A549 (cell line): ENCODE measurements at regions of chr5 and their contacts with region 1.

Region 1: GRCh38 chr5:55226027-55226933 is 835 bp downstream of the MCIDAS start:
- DNase-seq: peak; percentile 89 to 92
- ATAC-seq: peak; percentile 76 to 91
- H3K4me3 ChIP-seq: peak overlapping the region; percentile 55
- H3K27ac ChIP-seq: peak overlapping the region; percentile 64 to 90
- H3K4me1 ChIP-seq: 0 out of 3 replicates have a peak, but pooled peaks cover 5% of the 10 kb centered on the region
- CTCF ChIP-seq: peak; percentile 68
- EP300 ChIP-seq: no peak
- POLR2A ChIP-seq: peak; percentile 38
- RAD21 ChIP-seq: peak; percentile 70 to 71

Region 2: DNA sequence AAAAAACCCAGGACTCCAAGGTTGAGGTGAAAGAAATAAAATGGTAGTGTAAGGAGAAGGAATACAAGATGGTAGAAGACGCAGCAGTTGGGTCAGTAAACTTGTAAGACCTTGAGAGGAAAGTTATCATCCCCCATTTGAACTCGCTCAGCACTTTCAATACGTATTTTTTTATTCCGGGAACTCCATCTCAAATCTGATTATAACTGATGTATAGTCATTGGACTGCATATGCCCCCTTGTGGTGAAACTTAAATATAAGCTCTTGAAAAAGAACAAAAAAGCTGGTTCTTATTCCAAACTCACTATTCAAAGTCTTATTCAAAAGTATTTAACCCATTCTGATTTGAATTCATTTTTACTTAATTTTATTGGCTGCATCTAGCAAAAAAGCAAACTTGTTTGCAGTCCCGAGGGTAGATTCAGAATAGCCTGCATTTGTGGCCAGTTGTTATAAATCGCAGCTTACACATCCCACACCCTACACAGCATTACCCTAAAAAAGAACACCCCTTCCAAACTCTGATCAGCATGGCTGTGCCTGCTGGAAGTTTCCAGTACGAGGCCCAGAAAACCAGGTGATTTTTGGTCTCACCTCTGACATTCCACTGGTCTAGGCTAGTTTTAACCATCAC is 358.9 kb before region 1 on chr5:
- CTCF ChIA-PET with region 1: no interaction called
- POLR2A ChIA-PET with region 1: no interaction called
- DNase-seq: peak; percentile 41 to 50
- ATAC-seq: peak in 1 of 2 experiments; percentile 67; a peak in 3 of 6 replicates
- H3K4me3 ChIP-seq: no peak overlapping the region
- H3K27ac ChIP-seq: no peak overlapping the region
- H3K4me1 ChIP-seq: no peaks in the 10 kb centered on the region
- CTCF ChIP-seq: peak; percentile 70
- EP300 ChIP-seq: no peak
- POLR2A ChIP-seq: no peak
- RAD21 ChIP-seq: peak; percentile 57 to 63

Region 3: DNA sequence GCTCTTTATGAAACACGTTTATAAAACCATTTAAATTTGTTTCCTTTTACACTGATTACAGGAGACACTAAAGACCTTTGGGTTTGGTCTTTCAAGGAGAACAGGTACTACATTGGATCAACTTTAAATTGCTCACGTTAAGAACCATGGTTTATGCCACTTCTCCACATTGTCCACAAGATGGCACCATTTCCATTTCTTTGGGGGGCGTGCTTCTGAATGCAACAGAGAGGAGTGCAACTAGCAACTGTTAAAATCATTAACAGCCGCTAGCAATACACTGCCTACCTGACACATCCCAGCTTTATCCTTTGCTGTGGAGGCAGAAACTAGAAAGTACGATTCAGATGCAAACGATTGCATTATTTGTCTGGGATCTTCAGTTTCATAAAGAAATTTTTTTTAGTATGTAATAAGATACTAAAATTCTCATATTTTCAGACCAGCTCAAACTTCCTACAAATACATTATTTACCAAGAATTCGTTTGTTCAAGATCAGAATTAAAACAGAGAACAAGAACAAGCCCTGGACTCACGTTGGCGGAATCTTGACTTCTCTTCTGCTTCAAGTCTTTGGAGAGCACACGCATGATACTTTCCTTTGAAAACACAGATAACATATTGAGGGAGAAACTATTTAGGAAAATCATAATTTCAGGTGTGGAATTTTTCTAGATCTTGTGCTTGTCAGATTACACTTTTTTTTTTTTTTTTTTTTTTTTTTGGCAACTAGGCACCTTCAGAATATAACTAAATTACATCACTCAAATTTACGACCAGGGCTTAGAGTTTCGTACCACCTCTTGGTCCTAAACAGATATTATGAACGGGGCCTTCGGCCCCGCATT is 54.0 kb before region 1 on chr5:
- CTCF ChIA-PET with region 1: interaction called, 12 read pairs
- POLR2A ChIA-PET with region 1: no interaction called
- DNase-seq: peak; percentile 79 to 87
- ATAC-seq: peak; percentile 58 to 75
- H3K4me3 ChIP-seq: peak overlapping the region; percentile 54
- H3K27ac ChIP-seq: no peak overlapping the region
- H3K4me1 ChIP-seq: peaks cover 23% of the 10 kb centered on the region
- CTCF ChIP-seq: peak; percentile 93
- EP300 ChIP-seq: no peak
- POLR2A ChIP-seq: no peak
- RAD21 ChIP-seq: peak; percentile 92 to 94

Region 4: GRCh38 chr5:55187370-55187769 is 38.9 kb before region 1 on chr5:
- CTCF ChIA-PET with region 1: interaction called, 13 read pairs
- POLR2A ChIA-PET with region 1: no interaction called
- DNase-seq: peak in 1 of 2 experiments; percentile 36
- ATAC-seq: peak in 1 of 2 experiments; percentile 51; a peak in 2 of 6 replicates
- H3K4me3 ChIP-seq: no peak overlapping the region
- H3K27ac ChIP-seq: no peak overlapping the region
- H3K4me1 ChIP-seq: peaks cover 9% of the 10 kb centered on the region; the same call in 2 of the 3 replicates
- CTCF ChIP-seq: peak; percentile 49
- EP300 ChIP-seq: no peak
- POLR2A ChIP-seq: no peak
- RAD21 ChIP-seq: peak; percentile 35 to 56; a peak in 3 of 5 replicates

Region 5: GRCh38 chr5:55212274-55212673 is 14.0 kb before region 1 on chr5:
- CTCF ChIA-PET with region 1: interaction called, 57 read pairs
- POLR2A ChIA-PET with region 1: no interaction called
- DNase-seq: no peak
- ATAC-seq: no peak
- H3K4me3 ChIP-seq: no peak overlapping the region
- H3K27ac ChIP-seq: no peak overlapping the region
- H3K4me1 ChIP-seq: no peaks in the 10 kb centered on the region
- CTCF ChIP-seq: no peak
- EP300 ChIP-seq: no peak
- POLR2A ChIP-seq: no peak
- RAD21 ChIP-seq: no peak

Region 6: DNA sequence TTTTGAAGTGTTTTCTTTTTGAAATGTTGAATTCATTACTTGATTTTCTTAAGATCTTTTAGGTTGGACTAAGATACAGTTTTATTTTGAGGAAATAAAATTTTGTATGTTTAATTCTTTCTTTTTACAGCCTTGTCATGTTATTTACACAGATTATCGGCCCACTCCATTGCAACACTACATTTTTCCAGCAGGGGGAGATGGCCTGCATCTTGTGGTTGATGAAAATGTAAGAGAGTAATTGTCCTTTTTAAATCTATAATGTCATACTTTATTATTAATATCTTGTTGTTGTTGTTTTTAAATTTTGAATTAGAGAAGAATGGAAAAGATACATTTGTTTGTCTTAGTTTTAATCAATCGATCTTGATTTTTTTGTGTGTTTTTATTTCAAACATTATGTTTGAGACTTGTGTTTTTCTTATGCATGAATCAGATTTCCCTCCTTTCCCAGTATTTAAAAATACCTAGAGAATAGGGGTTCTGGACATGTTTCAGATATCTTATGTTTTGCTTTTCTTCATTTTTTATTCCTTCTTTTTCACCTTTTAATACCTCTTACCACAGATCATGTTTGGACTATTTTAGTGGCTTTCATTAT is 118.2 kb after region 1 on chr5:
- CTCF ChIA-PET with region 1: no interaction called
- POLR2A ChIA-PET with region 1: no interaction called
- DNase-seq: peak; percentile 21 to 71
- ATAC-seq: peak in 1 of 2 experiments; percentile 62; a peak in 2 of 6 replicates
- H3K4me3 ChIP-seq: no peak overlapping the region
- H3K27ac ChIP-seq: no peak overlapping the region
- H3K4me1 ChIP-seq: no peaks in the 10 kb centered on the region
- CTCF ChIP-seq: peak; percentile 83
- EP300 ChIP-seq: no peak
- POLR2A ChIP-seq: no peak
- RAD21 ChIP-seq: peak; percentile 62 to 64

Region 7: DNA sequence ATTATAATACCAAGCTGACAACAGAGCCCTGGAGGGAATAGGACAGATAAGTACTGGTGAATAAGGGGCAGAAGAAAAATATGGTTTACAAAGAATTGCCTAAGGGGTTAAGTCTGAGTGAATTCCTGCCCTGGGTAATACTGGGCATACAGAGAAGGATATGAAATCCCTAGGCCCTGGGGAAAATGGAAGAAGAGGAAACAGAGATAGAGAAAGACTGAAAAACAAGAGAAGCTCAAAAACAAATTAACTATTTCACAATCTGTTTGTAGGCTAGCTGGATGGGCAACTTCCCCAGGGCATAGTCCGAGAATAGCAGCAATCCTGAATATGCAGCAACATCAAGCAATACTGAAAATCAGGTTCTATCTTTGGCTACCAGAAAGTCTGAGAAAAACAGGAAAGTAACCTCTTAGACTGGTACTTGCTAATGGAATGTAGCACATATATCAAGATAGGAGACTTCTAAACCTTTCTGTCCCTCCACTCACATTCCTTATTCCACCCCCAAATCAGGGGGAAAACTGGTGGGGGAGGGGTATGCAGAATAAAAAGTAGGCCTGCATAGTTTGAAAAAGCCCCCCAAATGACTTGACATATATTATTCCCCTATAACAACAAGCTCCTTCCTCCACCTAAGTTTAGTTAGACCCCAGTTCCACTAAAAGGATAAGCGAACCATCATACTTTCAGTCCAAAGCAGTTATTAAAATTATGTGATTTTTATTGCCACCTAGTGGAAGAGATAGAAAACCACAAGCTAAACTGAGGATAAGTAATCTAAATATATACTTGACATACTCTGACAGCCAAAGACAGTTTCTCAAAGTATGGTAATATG is 465.2 kb after region 1 on chr5:
- CTCF ChIA-PET with region 1: interaction called, 13 read pairs
- POLR2A ChIA-PET with region 1: no interaction called
- DNase-seq: peak; percentile 27 to 55
- ATAC-seq: peak; percentile 34 to 77; a peak in 4 of 6 replicates
- H3K4me3 ChIP-seq: no peak overlapping the region
- H3K27ac ChIP-seq: peak overlapping the region; percentile 23 to 61; a peak in 5 of 6 replicates
- H3K4me1 ChIP-seq: peaks cover 25% of the 10 kb centered on the region
- CTCF ChIP-seq: peak; percentile 85
- EP300 ChIP-seq: no peak
- POLR2A ChIP-seq: no peak
- RAD21 ChIP-seq: peak; percentile 80 to 87